BJ (cell line): ENCODE measurements at regions of chr2 and their contacts with region 1.

Region 1: DNA sequence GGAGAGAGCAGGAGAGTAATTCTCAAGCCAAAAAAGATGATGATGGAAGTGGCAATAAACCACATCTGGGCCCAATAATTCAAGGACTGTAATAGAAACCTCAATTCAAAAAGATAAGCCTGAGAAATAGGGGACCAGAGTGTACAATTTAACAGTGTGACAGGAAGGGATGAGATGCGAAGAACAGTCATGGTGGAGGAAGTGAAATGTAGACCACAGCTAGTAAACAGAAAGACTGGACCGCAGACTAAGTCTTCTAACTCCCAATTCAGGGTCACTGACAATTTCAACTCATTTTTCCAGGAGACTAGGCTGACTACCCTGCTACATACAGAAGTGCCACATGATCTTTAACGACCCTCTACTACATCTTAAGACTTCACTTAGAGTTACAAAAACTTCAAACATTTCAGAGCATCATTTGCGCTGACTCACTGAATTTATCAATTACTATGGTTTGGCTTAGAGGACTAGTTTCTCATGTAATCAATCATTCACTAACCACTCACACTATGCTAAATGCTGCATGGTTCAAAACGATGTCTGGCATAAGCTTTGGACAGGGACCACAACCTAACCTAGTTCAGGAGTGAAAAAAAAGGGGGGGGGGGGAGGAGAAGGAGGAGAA is 9.0 kb downstream of the CUL3 start:
- DNase-seq: no peak
- H3K4me3 ChIP-seq: no peak overlapping the region
- H3K27me3 ChIP-seq: no peaks in the 10 kb centered on the region
- CTCF ChIP-seq: no peak

Region 2: GRCh38 chr2:224498991-224499390 is 77.2 kb before region 1 on chr2:
- CTCF ChIA-PET with region 1: no interaction called
- POLR2A ChIA-PET with region 1: interaction called, 10 read pairs
- DNase-seq: no peak
- H3K4me3 ChIP-seq: no peak overlapping the region
- H3K27me3 ChIP-seq: no peaks in the 10 kb centered on the region
- CTCF ChIP-seq: no peak

Region 3: DNA sequence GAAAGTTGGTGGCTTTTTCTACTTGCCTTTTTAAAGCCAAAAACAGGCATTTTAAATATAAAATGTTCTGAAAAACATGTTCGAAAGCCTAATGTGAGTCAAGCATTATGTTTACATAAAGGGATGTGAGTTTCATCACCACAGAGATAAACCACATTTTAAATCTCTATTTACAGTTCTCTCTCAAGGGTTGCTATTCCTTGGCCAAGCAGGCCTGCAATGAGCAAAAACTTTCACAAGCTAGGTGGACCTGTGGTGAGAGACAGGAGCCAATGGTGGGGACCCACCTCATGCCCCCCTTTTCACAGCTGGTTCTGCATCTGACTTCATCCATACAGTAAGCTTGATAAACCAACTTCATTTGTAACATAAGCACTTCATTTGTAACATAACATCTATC is 56.1 kb before region 1 on chr2:
- CTCF ChIA-PET with region 1: no interaction called
- POLR2A ChIA-PET with region 1: no interaction called
- DNase-seq: peak; percentile 44
- H3K4me3 ChIP-seq: no peak overlapping the region
- H3K27me3 ChIP-seq: no peaks in the 10 kb centered on the region
- CTCF ChIP-seq: no peak

Region 4: GRCh38 chr2:225100856-225101294 is 524.7 kb after region 1 on chr2:
- CTCF ChIA-PET with region 1: no interaction called
- POLR2A ChIA-PET with region 1: no interaction called
- DNase-seq: peak; percentile 89
- H3K4me3 ChIP-seq: no peak overlapping the region
- H3K27me3 ChIP-seq: no peaks in the 10 kb centered on the region
- CTCF ChIP-seq: no peak